ENCODE measurements at regions of chr7 and their contacts with region 1.

Region 1: GRCh38 chr7:88291398-88292173 is 15.1 kb downstream of the STEAP4 start:
- DNase-seq: peak; percentile 54
- H3K4me3 Mint-ChIP-seq: no peak overlapping the region
- H3K27ac Mint-ChIP-seq: peak overlapping the region; percentile 96
- H3K4me1 Mint-ChIP-seq: peaks cover 29% of the 10 kb centered on the region
- H3K27me3 Mint-ChIP-seq: no peaks in the 10 kb centered on the region
- CTCF ChIP-seq: no peak

Region 2: GRCh38 chr7:88226886-88227516 is 64.6 kb before region 1 on chr7:
- CTCF ChIA-PET with region 1: no interaction called
- intact Hi-C with region 1: loop called (anchors 2 kb)
- DNase-seq: peak; percentile 55
- H3K4me3 Mint-ChIP-seq: no peak overlapping the region
- H3K27ac Mint-ChIP-seq: peak overlapping the region; percentile 39
- H3K4me1 Mint-ChIP-seq: peaks cover 15% of the 10 kb centered on the region
- H3K27me3 Mint-ChIP-seq: no peaks in the 10 kb centered on the region
- CTCF ChIP-seq: no peak

Region 3: GRCh38 chr7:88278882-88279281 is 12.7 kb before region 1 on chr7:
- CTCF ChIA-PET with region 1: no interaction called
- intact Hi-C with region 1: loop called (anchors 1 kb)
- DNase-seq: peak; percentile 52
- H3K4me3 Mint-ChIP-seq: peak overlapping the region; percentile 36
- H3K27ac Mint-ChIP-seq: peak overlapping the region; percentile 99
- H3K4me1 Mint-ChIP-seq: peaks cover 18% of the 10 kb centered on the region
- H3K27me3 Mint-ChIP-seq: no peaks in the 10 kb centered on the region
- CTCF ChIP-seq: no peak

Region 4: GRCh38 chr7:88357781-88358525 is 66.4 kb after region 1 on chr7:
- CTCF ChIA-PET with region 1: no interaction called
- intact Hi-C with region 1: loop called (anchors 5 kb)
- DNase-seq: no peak
- H3K4me3 Mint-ChIP-seq: no peak overlapping the region
- H3K27ac Mint-ChIP-seq: no peak overlapping the region
- H3K4me1 Mint-ChIP-seq: no peaks in the 10 kb centered on the region
- H3K27me3 Mint-ChIP-seq: no peaks in the 10 kb centered on the region
- CTCF ChIP-seq: no peak